ENCODE measurements at regions of chr12 and their contacts with region 1.

Region 1: DNA sequence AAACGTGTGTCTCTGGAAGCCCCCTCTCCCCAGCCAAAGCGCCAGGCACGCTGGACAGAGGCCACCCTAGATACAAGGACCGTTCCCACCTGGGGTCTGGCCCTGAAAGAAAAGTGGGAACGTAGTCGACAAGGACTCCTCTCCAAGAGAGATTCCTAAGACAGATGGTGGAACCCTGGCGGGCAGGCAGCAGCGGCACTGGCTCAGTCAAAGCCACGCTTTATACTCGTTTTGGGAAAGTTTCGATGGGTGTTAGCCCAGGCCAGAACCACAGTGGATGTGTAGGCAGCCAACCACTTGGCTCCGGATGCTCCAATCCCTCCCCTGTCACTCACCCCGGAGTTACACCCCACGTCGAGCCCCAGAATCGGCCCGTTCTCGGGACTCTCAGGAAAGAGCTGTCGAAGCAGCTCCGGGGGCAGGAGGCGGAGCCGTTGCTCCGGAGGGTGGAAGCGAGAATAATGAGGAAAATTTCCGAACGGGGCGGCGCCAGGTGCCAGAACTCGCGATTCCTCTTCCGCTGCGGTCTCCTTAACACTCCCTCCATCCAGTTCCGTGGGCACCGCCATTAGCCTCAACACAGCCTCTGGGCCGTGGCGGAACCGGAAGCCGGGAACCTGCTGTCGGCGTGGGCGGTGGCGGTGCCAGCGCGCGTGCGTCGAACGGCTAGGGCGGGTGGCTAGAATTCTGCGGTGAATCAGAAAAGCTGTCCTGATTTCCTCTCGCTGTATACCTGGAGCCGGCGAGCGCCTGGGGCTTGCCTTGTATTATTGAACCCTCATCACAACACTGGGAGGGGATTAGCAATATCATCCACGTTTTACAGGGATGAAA is at the start of gene BCDIN3D:
- DNase-seq: peak; percentile 97
- total RNA-seq, gene BCDIN3D: 2.6 TPM

Region 2: GRCh38 chr12:49644620-49644994 is 198.1 kb before region 1 on chr12:
- intact Hi-C with region 1: loop called (anchors 10 kb)
- DNase-seq: peak; percentile 90

Region 3: GRCh38 chr12:49776413-49776812 is 66.3 kb before region 1 on chr12:
- intact Hi-C with region 1: loop called (anchors 1 kb)
- DNase-seq: no peak

Region 4: GRCh38 chr12:49828133-49829091 is 14.3 kb before region 1 on chr12 and contains the start of gene NCKAP5L:
- intact Hi-C with region 1: loop called (anchors 1 kb)
- DNase-seq: peak; percentile 99
- total RNA-seq, gene NCKAP5L: 26.5 TPM